GM12878 (cell line): ENCODE measurements at regions of chr13 and their contacts with region 1.

Region 1: DNA sequence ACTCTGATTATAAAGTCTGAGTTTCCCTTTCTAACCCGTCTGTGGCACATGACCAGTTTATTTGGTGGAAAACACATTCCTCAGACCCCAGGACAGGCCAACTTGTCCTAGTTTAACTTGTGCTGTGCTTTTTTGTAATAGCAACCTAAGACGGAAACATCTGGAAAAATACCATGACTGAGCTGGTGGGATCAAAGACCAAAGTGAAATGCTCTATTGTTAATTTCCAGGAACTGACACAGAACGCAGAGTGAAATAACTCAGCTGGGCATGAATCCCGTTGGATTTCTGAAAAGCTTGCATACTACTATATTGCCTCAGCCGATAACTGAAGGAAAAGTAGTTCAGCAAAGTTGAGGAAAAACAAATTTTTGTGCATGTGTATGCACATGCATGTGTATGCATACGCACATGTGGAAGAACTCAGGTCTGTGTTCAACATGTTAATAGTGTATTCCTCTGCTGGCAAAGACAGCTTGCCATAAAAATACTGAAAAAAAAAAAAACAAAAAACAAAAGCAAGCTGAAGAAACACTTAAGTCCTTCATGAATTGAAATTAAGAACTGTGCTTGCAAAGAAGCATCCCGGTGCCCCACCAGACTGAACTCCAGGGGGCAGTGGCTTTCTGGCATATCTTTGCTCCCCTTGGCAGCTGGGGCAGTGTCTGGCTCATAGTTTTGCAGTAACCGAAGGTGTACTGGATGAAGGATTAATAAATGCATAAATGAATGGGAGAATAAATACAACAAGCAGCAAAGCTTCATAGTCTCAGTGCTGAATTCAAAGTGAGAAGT is 187.8 kb downstream of the LHFPL6 start:
- DNase-seq: no peak
- ATAC-seq: peak; percentile 74
- H3K4me3 ChIP-seq: no peak overlapping the region
- H3K27ac ChIP-seq: peak overlapping the region; percentile 62; the same call in 1 of the 2 replicates
- H3K4me1 ChIP-seq: peaks cover 4% of the 10 kb centered on the region; the same call in 1 of the 2 replicates
- H3K27me3 ChIP-seq: no peaks in the 10 kb centered on the region
- CTCF ChIP-seq: peak; percentile 13 to 35 (median 25); a peak in 3 of 6 replicates
- EP300 ChIP-seq: no peak
- POLR2A ChIP-seq: no peak
- RAD21 ChIP-seq: 0 out of 2 replicates have a peak, but pooled peaks have one; percentile 33

Region 2: GRCh38 chr13:39353988-39354387 is 61.2 kb before region 1 on chr13:
- CTCF ChIA-PET with region 1: no interaction called
- POLR2A ChIA-PET with region 1: no interaction called
- RAD21 ChIA-PET with region 1: no interaction called
- SMC1A ChIA-PET with region 1: no interaction called
- in situ Hi-C with region 1: no loop called
- intact Hi-C with region 1: no loop called
- DNase-seq: no peak
- ATAC-seq: no peak
- H3K4me3 ChIP-seq: no peak overlapping the region
- H3K27ac ChIP-seq: no peak overlapping the region
- H3K4me1 ChIP-seq: no peaks in the 10 kb centered on the region
- H3K27me3 ChIP-seq: no peaks in the 10 kb centered on the region
- CTCF ChIP-seq: no peak
- EP300 ChIP-seq: no peak
- POLR2A ChIP-seq: no peak
- RAD21 ChIP-seq: no peak

Region 3: GRCh38 chr13:39602614-39603366 is 187.6 kb after region 1 on chr13 and contains the start of gene LHFPL6:
- CTCF ChIA-PET with region 1: interaction called, 18 read pairs
- POLR2A ChIA-PET with region 1: no interaction called
- RAD21 ChIA-PET with region 1: interaction called, 21 read pairs
- SMC1A ChIA-PET with region 1: interaction called, 12 read pairs
- in situ Hi-C with region 1: no loop called
- intact Hi-C with region 1: loop called (anchors 5 kb)
- DNase-seq: no peak
- ATAC-seq: peak; percentile 96
- H3K4me3 ChIP-seq: peak within 1 kb of the TSS; percentile 58
- H3K27ac ChIP-seq: no peak within 1 kb of the TSS
- H3K4me1 ChIP-seq: no peaks in the 10 kb centered on the region; the same call in 1 of the 2 replicates
- H3K27me3 ChIP-seq: peaks cover 0 to 5% of the 10 kb centered on the region in 2 experiments; a peak in 3 of 4 replicates
- CTCF ChIP-seq: peak; percentile 9 to 23 (median 11); a peak in 3 of 6 replicates
- EP300 ChIP-seq: no peak
- POLR2A ChIP-seq: peak; percentile 53
- RAD21 ChIP-seq: no peak
- polyA plus RNA-seq, gene LHFPL6: 0.11 to 0.20 TPM

Region 4: GRCh38 chr13:39607876-39608275 is 192.7 kb after region 1 on chr13:
- CTCF ChIA-PET with region 1: interaction called, 88 read pairs
- POLR2A ChIA-PET with region 1: no interaction called
- RAD21 ChIA-PET with region 1: interaction called, 26 read pairs
- SMC1A ChIA-PET with region 1: interaction called, 65 read pairs
- in situ Hi-C with region 1: no loop called
- intact Hi-C with region 1: loop called (anchors 1 kb)
- DNase-seq: no peak
- ATAC-seq: no peak
- H3K4me3 ChIP-seq: no peak overlapping the region
- H3K27ac ChIP-seq: no peak overlapping the region
- H3K4me1 ChIP-seq: no peaks in the 10 kb centered on the region
- H3K27me3 ChIP-seq: no peaks in the 10 kb centered on the region; a peak in 2 of 4 replicates
- CTCF ChIP-seq: no peak
- EP300 ChIP-seq: no peak
- POLR2A ChIP-seq: no peak
- RAD21 ChIP-seq: no peak